ENCODE measurements at regions of chr16 and their contacts with region 1.

Region 1: DNA sequence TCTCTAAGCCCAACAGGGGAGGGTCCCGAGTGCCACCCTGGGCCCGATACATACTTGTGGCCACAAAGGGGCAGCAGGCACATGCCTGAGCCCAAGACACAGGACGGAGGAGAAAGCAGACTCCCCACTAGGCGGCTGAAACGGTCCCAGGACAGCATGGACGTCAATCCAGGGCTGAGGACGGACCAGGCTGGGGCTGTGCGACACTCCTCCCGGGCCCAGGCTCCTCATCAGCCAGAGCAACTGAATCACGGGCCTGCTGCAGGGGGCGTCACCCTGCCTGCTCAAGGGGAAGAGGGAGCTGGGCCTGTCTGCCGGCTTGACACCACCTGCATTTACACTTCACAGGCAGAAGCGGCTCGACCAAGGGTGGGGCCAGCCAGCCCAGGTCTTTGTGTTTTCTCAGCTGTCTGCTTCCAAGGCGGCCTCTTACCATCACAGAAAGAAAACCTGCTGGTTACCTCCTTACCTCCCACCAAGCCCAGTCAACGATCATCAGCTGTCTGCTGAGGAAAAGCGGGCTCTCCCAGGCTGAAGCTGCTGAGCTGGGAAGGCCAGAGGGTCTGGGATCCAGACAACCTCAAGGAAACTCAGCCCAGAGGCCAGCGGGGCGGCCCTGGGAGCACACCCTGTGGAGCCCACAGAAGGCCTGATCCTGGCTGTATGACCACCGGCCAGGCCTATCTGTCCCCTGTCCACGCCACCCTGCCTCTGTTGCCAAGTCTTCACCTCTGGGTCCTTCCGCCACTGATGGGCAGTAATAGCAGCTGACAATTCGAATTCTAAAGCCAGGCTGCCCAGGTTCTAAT is 26.4 kb downstream of the KIFC3 start:
- DNase-seq: no peak
- H3K4me3 ChIP-seq: no peak overlapping the region
- CTCF ChIP-seq: no peak
- POLR2A ChIP-seq: no peak

Region 2: GRCh38 chr16:57704011-57704904 is 71.6 kb before region 1 on chr16:
- intact Hi-C with region 1: loop called (anchors 2 kb)
- DNase-seq: peak in 1 of 2 donors; percentile 18
- H3K4me3 ChIP-seq: no peak overlapping the region
- CTCF ChIP-seq: no peak
- POLR2A ChIP-seq: no peak

Measured in lower leg skin (tissue), 4 donors.